CD8-positive, alpha-beta T cell (primary cell): ENCODE measurements at regions of chr19 and their contacts with region 1.

Region 1: DNA sequence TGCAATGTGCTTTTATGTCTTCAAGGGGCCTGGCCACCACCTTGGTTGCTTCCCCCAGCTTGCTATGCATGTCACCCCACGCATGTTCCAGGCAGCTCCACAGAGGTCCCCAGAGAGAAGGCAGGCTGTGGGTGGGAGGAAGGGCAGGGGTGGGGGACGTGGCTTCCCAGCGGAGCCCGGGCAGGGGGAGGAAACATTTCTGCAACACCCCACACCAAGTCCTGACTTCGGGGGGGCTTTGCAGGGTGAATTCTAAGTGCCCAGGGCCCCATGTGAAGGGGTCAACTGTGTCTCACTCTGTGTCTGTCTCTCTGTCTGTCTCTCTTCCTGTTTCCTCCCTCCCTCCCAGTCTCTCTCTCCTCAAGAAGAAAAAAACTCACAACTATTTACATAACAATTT is 39.6 kb downstream of the LTBP4 start:
- DNase-seq: peak in 1 of 9 experiments; percentile 52
- ATAC-seq: peak; percentile 26
- H3K4me3 ChIP-seq: no peak overlapping the region
- H3K4me3 Mint-ChIP-seq: no peak overlapping the region
- H3K27ac ChIP-seq: no peak overlapping the region
- H3K27ac Mint-ChIP-seq: no peak overlapping the region
- H3K4me1 ChIP-seq: peaks cover 6% of the 10 kb centered on the region
- H3K4me1 Mint-ChIP-seq: peaks cover 11% of the 10 kb centered on the region
- H3K27me3 ChIP-seq: peaks cover 0 to 3% of the 10 kb centered on the region in 2 experiments
- H3K27me3 Mint-ChIP-seq: peaks cover 2% of the 10 kb centered on the region
- CTCF ChIP-seq: no peak

Region 2: DNA sequence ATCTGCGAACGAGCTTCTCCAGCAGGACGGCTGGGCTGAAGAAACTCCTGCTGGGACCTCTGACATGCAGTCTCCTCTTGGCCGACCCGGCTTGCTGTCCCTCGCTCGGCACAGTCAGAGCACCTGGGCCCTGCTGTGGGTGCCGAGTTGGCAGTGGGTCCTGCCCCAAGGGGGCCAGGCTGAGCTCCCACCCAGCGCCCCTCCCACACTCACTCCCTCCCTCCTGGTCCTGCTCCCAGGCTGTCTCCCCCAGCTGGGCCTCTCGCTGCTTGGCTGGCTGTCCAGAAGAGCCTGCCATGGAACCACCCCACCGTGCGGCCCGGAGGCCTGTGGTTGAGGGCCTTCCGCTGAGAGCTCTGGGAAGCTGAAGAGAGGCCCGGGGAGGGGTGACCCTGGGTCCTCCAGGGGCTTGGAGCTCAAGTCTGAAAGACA is 361.6 kb before region 1 on chr19:
- CTCF ChIA-PET with region 1: no interaction called
- POLR2A ChIA-PET with region 1: no interaction called
- intact Hi-C with region 1: no loop called
- DNase-seq: no peak
- ATAC-seq: no peak
- H3K4me3 ChIP-seq: no peak overlapping the region
- H3K4me3 Mint-ChIP-seq: no peak overlapping the region
- H3K27ac ChIP-seq: peak overlapping the region in 1 of 2 experiments; percentile 37
- H3K27ac Mint-ChIP-seq: no peak overlapping the region
- H3K4me1 ChIP-seq: peaks cover 79% of the 10 kb centered on the region
- H3K4me1 Mint-ChIP-seq: peaks cover 77% of the 10 kb centered on the region
- H3K27me3 ChIP-seq: no peaks in the 10 kb centered on the region
- H3K27me3 Mint-ChIP-seq: no peaks in the 10 kb centered on the region
- CTCF ChIP-seq: no peak

Region 3: DNA sequence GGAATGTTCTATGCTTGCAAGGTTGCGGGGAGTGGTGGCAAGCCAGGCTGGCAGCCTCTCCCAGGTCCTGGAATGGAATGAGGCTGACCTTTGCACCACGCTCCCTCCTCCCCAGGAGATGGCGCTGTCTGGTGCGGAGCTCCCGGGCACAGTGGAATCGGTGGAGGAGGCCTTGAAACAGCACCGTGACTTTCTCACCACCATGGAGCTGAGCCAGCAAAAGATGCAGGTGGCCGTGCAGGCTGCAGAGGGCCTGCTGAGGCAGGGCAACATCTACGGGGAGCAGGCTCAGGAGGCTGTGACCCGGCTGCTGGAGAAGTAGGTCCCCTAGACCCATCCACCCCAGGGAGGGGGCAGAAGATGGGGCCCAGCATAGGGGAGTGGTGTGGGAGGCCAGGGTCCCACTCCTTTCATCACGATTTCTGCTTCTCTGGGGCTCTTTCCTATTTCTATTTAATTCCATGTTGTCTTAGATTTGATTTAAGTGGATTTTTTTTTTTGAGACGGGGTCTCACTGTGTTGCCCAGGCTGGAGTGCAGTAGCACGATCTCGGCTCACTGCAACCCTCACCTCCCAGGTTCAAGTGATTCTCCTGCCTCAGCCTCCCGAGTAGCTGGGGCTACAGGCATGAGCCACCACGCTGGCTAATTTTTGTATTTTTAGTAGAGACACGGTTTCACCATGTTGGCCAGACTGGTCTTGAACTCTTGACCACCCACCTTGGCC is 117.3 kb before region 1 on chr19:
- CTCF ChIA-PET with region 1: no interaction called
- POLR2A ChIA-PET with region 1: no interaction called
- intact Hi-C with region 1: no loop called
- DNase-seq: peak in 5 of 9 experiments; percentile 31 to 61 (median 39)
- ATAC-seq: peak; percentile 69
- H3K4me3 ChIP-seq: no peak overlapping the region
- H3K4me3 Mint-ChIP-seq: no peak overlapping the region
- H3K27ac ChIP-seq: no peak overlapping the region
- H3K27ac Mint-ChIP-seq: no peak overlapping the region
- H3K4me1 ChIP-seq: no peaks in the 10 kb centered on the region
- H3K4me1 Mint-ChIP-seq: peaks cover 4% of the 10 kb centered on the region
- H3K27me3 ChIP-seq: no peaks in the 10 kb centered on the region
- H3K27me3 Mint-ChIP-seq: peaks cover 17% of the 10 kb centered on the region
- CTCF ChIP-seq: peak; percentile 20

Region 4: GRCh38 chr19:40542202-40542859 is 98.4 kb before region 1 on chr19:
- CTCF ChIA-PET with region 1: interaction called, 23 read pairs
- POLR2A ChIA-PET with region 1: no interaction called
- intact Hi-C with region 1: loop called in 1 of 2 experiments (anchors 2 kb)
- DNase-seq: no peak
- ATAC-seq: no peak
- H3K4me3 ChIP-seq: no peak overlapping the region
- H3K4me3 Mint-ChIP-seq: no peak overlapping the region
- H3K27ac ChIP-seq: no peak overlapping the region
- H3K27ac Mint-ChIP-seq: no peak overlapping the region
- H3K4me1 ChIP-seq: no peaks in the 10 kb centered on the region
- H3K4me1 Mint-ChIP-seq: no peaks in the 10 kb centered on the region
- H3K27me3 ChIP-seq: no peaks in the 10 kb centered on the region
- H3K27me3 Mint-ChIP-seq: peaks cover 15% of the 10 kb centered on the region
- CTCF ChIP-seq: no peak

Region 5: GRCh38 chr19:40549007-40549708 is 91.6 kb before region 1 on chr19:
- CTCF ChIA-PET with region 1: interaction called, 34 read pairs
- POLR2A ChIA-PET with region 1: no interaction called
- intact Hi-C with region 1: loop called in 1 of 2 experiments (anchors 2 kb)
- DNase-seq: peak; percentile 44 to 82 (median 74)
- ATAC-seq: peak; percentile 92
- H3K4me3 ChIP-seq: no peak overlapping the region
- H3K4me3 Mint-ChIP-seq: peak overlapping the region; percentile 22
- H3K27ac ChIP-seq: no peak overlapping the region
- H3K27ac Mint-ChIP-seq: no peak overlapping the region
- H3K4me1 ChIP-seq: peaks cover 4% of the 10 kb centered on the region
- H3K4me1 Mint-ChIP-seq: peaks cover 9% of the 10 kb centered on the region
- H3K27me3 ChIP-seq: peaks cover 16 to 26% of the 10 kb centered on the region in 2 experiments
- H3K27me3 Mint-ChIP-seq: peaks cover 57% of the 10 kb centered on the region
- CTCF ChIP-seq: peak; percentile 55

Region 6: DNA sequence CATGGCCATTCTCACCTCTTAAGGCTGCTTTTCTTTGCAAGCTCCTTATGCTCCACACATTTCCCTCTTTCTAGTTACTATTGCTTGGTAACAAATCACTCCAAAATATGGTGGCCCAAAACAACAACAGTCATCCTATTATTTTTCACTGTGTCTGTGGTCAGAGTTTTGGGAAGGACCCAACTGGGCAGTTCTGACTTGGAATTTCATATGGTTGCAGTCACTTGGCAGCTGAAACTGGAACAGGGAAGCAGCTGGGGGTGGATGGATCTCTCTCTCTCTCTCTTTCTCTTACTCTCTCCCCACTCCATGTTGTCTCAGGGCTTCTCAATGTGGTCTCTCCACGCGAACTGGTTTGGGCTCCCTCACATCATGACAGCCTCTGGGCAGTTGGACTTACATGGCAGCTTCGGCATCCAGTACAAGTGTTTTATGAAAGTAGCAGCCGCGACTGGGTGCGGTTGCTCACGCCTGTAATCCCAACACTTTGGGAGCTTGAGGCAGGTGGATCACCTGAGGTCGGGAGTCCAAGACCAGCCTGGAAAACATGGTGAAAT is 10.1 kb after region 1 on chr19:
- CTCF ChIA-PET with region 1: interaction called, 29 read pairs
- POLR2A ChIA-PET with region 1: interaction called, 4 read pairs
- intact Hi-C with region 1: no loop called
- DNase-seq: no peak
- ATAC-seq: no peak
- H3K4me3 ChIP-seq: no peak overlapping the region
- H3K4me3 Mint-ChIP-seq: no peak overlapping the region
- H3K27ac ChIP-seq: no peak overlapping the region
- H3K27ac Mint-ChIP-seq: no peak overlapping the region
- H3K4me1 ChIP-seq: no peaks in the 10 kb centered on the region
- H3K4me1 Mint-ChIP-seq: no peaks in the 10 kb centered on the region
- H3K27me3 ChIP-seq: no peaks in the 10 kb centered on the region
- H3K27me3 Mint-ChIP-seq: peaks cover 2% of the 10 kb centered on the region
- CTCF ChIP-seq: no peak

Region 7: GRCh38 chr19:40674291-40674690 is 33.5 kb after region 1 on chr19:
- CTCF ChIA-PET with region 1: no interaction called
- POLR2A ChIA-PET with region 1: no interaction called
- intact Hi-C with region 1: no loop called
- DNase-seq: no peak
- ATAC-seq: no peak
- H3K4me3 ChIP-seq: no peak overlapping the region
- H3K4me3 Mint-ChIP-seq: no peak overlapping the region
- H3K27ac ChIP-seq: peak overlapping the region in 1 of 2 experiments; percentile 4
- H3K27ac Mint-ChIP-seq: no peak overlapping the region
- H3K4me1 ChIP-seq: peaks cover 4% of the 10 kb centered on the region
- H3K4me1 Mint-ChIP-seq: no peaks in the 10 kb centered on the region
- H3K27me3 ChIP-seq: no peaks in the 10 kb centered on the region
- H3K27me3 Mint-ChIP-seq: no peaks in the 10 kb centered on the region
- CTCF ChIP-seq: no peak